CD4-positive, alpha-beta memory T cell (primary cell): ENCODE measurements at regions of chr14 and their contacts with region 1.

Region 1: GRCh38 chr14:44897045-44897844 is 64.5 kb downstream of the KLHL28 start:
- DNase-seq: peak; percentile 91 to 99 (median 93)
- H3K4me3 ChIP-seq: peak overlapping the region; percentile 30 to 74
- H3K4me3 Mint-ChIP-seq: peak overlapping the region; percentile 91 to 98 (median 94)
- H3K27ac ChIP-seq: peak overlapping the region; percentile 90
- H3K27ac Mint-ChIP-seq: peak overlapping the region; percentile 83 to 99 (median 98)
- H3K4me1 ChIP-seq: peaks cover 22% of the 10 kb centered on the region
- H3K4me1 Mint-ChIP-seq: peaks cover 14 to 27% (median 21%) of the 10 kb centered on the region in 4 donors
- H3K27me3 ChIP-seq: no peaks in the 10 kb centered on the region
- H3K27me3 Mint-ChIP-seq: no peaks in the 10 kb centered on the region

Region 2: DNA sequence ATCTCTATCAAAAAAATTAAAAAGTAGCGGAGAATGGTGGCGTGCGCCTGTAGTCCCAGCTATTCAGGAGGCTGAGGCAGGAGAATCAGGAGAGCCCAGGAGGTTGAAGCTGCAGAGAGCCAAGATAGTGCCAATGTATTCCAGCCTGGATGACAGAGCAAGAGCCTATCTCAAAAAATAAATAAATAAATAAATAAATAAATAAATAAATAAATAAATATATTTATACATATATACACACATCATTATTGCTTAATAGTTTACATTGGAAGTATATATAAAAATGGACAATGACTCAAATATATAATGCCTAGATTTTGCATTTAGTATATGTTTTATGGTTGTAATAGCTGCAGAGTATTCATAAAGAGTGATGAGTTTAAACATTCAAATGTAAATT is 117.9 kb after region 1 on chr14:
- CTCF ChIA-PET with region 1: no interaction called
- POLR2A ChIA-PET with region 1: no interaction called
- intact Hi-C with region 1: no loop called
- DNase-seq: no peak
- H3K4me3 ChIP-seq: no peak overlapping the region
- H3K4me3 Mint-ChIP-seq: no peak overlapping the region
- H3K27ac ChIP-seq: no peak overlapping the region
- H3K27ac Mint-ChIP-seq: no peak overlapping the region
- H3K4me1 ChIP-seq: no peaks in the 10 kb centered on the region
- H3K4me1 Mint-ChIP-seq: no peaks in the 10 kb centered on the region
- H3K27me3 ChIP-seq: no peaks in the 10 kb centered on the region
- H3K27me3 Mint-ChIP-seq: no peaks in the 10 kb centered on the region

Region 3: GRCh38 chr14:45065540-45065939 is 168.3 kb after region 1 on chr14:
- CTCF ChIA-PET with region 1: no interaction called
- POLR2A ChIA-PET with region 1: no interaction called
- intact Hi-C with region 1: no loop called
- DNase-seq: no peak
- H3K4me3 ChIP-seq: no peak overlapping the region
- H3K4me3 Mint-ChIP-seq: no peak overlapping the region
- H3K27ac ChIP-seq: no peak overlapping the region
- H3K27ac Mint-ChIP-seq: no peak overlapping the region
- H3K4me1 ChIP-seq: no peaks in the 10 kb centered on the region
- H3K4me1 Mint-ChIP-seq: no peaks in the 10 kb centered on the region
- H3K27me3 ChIP-seq: no peaks in the 10 kb centered on the region
- H3K27me3 Mint-ChIP-seq: no peaks in the 10 kb centered on the region

Region 4: GRCh38 chr14:45134051-45134958 is 237.1 kb after region 1 on chr14 and contains the start of gene FKBP3:
- CTCF ChIA-PET with region 1: no interaction called
- POLR2A ChIA-PET with region 1: interaction called, 16 read pairs
- intact Hi-C with region 1: loop called (anchors 1 kb)
- DNase-seq: peak; percentile 90 to 99 (median 96)
- H3K4me3 ChIP-seq: peak within 1 kb of the TSS; percentile 91 to 97
- H3K4me3 Mint-ChIP-seq: peak within 1 kb of the TSS; percentile 89 to 100 (median 98)
- H3K27ac ChIP-seq: peak within 1 kb of the TSS; percentile 91
- H3K27ac Mint-ChIP-seq: peak within 1 kb of the TSS; percentile 91 to 99 (median 97)
- H3K4me1 ChIP-seq: peaks cover 44% of the 10 kb centered on the region
- H3K4me1 Mint-ChIP-seq: peaks cover 26 to 62% (median 45%) of the 10 kb centered on the region in 4 donors
- H3K27me3 ChIP-seq: no peaks in the 10 kb centered on the region
- H3K27me3 Mint-ChIP-seq: no peaks in the 10 kb centered on the region
- total RNA-seq, gene FKBP3: 57.0 to 64.7 TPM